ENCODE measurements at regions of chr20 and their contacts with region 1.

Region 1: GRCh38 chr20:25319241-25320034 is 71.2 kb downstream of the ABHD12 start:
- DNase-seq: no peak
- ATAC-seq: peak; percentile 8 to 19

Region 2: DNA sequence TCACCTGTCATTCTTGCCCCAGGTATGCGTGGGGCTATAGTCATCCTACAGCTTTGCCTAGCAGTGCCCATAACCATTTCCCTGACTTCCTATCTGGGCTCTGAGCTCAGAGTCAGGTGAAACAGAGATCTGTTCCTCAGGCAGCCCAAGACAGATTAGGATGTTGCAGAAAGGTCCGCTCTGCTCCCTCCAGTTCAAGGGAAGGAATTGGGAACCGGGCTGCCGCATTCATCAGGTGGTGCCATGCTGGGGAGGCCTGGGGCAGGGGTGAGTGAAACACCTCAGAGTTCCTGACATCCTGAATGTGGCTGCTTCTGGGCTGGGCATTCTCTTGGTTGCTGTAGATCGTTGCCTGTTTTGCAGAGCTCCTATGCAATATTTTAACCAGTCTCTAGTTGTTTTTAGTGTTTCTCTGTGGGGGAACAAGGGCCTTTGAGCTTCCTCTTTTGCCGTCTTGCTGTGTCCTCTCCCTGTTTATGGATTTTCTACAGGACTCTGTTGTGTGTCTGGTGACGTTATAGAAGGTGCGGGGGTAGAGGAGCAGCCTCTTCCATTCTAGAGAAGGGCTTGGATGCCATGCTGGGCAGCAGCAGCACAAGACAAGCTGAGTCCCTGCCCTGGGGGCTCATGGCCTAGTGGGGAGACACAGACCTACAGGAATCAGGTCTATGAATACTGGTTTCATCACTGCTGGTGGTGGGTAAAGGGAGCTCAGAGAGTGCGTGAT is 114.7 kb before region 1 on chr20:
- intact Hi-C with region 1: no loop called
- DNase-seq: no peak
- ATAC-seq: peak; percentile 13 to 34

Region 3: DNA sequence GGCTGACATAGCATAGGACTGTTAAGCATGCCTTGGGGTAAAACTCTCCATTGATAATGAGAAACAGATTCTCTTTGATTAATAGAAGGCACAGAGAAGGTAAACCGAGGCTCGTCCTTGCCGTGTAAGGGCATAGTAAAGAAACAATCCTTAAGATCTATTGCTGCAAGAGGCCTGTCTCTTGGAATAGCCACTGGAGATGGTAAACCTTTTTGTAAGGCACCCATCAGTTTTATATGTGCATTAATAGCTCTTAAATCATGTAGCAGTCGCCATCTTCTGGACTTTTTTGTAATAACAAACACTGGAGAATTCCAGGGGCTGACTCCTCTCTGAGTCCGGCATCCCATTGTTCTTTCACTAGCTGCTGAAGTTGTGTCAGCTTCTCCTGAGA is 79.6 kb after region 1 on chr20:
- intact Hi-C with region 1: loop called in 1 of 2 experiments (anchors 5 kb)
- DNase-seq: no peak
- ATAC-seq: peak; percentile 83 to 84

Measured in left cardiac atrium (tissue), 4 donors.